Naive thymus-derived CD4-positive, alpha-beta T cell (primary cell): ENCODE measurements at regions of chr13 and their contacts with region 1.

Region 1: GRCh38 chr13:72757792-72758535 is 23.7 kb downstream of the DIS3 start:
- DNase-seq: no peak
- ATAC-seq: no peak
- H3K4me3 ChIP-seq: no peak overlapping the region
- H3K4me3 Mint-ChIP-seq: no peak overlapping the region
- H3K27ac ChIP-seq: no peak overlapping the region
- H3K27ac Mint-ChIP-seq: no peak overlapping the region
- H3K4me1 ChIP-seq: no peaks in the 10 kb centered on the region
- H3K4me1 Mint-ChIP-seq: peaks cover 0 to 10% (median 0%) of the 10 kb centered on the region in 7 donors
- H3K27me3 ChIP-seq: no peaks in the 10 kb centered on the region
- H3K27me3 Mint-ChIP-seq: no peaks in the 10 kb centered on the region

Region 2: DNA sequence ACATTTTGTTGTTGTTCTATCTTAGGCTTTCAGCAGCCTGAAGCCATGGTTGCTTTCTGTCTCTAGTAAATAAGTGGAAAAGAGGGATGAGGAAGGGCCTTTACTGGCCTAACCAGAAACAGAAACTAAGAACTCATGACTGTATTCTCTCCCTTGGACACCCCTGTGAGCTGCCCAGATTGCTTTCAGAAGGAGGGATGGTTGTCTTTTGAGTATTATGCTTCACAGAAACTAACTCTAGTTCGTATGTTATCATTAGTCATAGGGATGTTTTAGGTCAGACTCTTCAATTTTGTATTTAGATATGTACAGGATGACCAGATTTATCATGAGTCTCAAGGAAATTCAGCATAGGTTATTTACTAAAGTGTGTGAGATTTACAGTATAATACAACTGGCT is 12.7 kb before region 1 on chr13:
- CTCF ChIA-PET with region 1: no interaction called
- POLR2A ChIA-PET with region 1: no interaction called
- intact Hi-C with region 1: no loop called
- DNase-seq: no peak
- ATAC-seq: no peak
- H3K4me3 ChIP-seq: no peak overlapping the region
- H3K4me3 Mint-ChIP-seq: no peak overlapping the region
- H3K27ac ChIP-seq: no peak overlapping the region
- H3K27ac Mint-ChIP-seq: peak overlapping the region in 7 of 9 donors; percentile 28 to 65 (median 37)
- H3K4me1 ChIP-seq: no peaks in the 10 kb centered on the region
- H3K4me1 Mint-ChIP-seq: peaks cover 4 to 28% (median 16%) of the 10 kb centered on the region in 7 donors
- H3K27me3 ChIP-seq: no peaks in the 10 kb centered on the region
- H3K27me3 Mint-ChIP-seq: no peaks in the 10 kb centered on the region

Region 3: DNA sequence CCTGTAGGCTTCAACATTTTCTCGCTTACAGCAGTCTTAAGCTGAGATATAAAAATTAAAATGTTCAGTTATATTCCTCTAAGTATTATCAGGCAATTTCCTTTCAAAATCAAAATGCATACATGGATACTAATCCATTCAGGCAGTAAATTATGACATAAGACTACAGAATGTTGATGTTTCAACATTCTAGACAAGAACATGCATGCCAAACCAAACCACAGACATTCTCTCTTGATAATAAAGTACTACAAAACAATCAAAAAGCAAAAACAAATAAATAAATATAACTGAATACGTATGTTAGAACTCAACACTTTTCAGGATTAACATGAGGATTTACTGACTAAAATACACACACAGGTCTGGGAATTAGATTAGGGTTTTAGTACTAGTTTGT is 16.1 kb after region 1 on chr13:
- CTCF ChIA-PET with region 1: no interaction called
- POLR2A ChIA-PET with region 1: interaction called, 5 read pairs
- intact Hi-C with region 1: loop called (anchors 2 kb)
- DNase-seq: no peak
- ATAC-seq: no peak
- H3K4me3 ChIP-seq: no peak overlapping the region
- H3K4me3 Mint-ChIP-seq: no peak overlapping the region
- H3K27ac ChIP-seq: no peak overlapping the region
- H3K27ac Mint-ChIP-seq: peak overlapping the region in 1 of 9 donors; percentile 66
- H3K4me1 ChIP-seq: peaks cover under 1 to 4% of the 10 kb centered on the region in 2 donors
- H3K4me1 Mint-ChIP-seq: peaks cover 13 to 33% (median 23%) of the 10 kb centered on the region in 7 donors
- H3K27me3 ChIP-seq: no peaks in the 10 kb centered on the region
- H3K27me3 Mint-ChIP-seq: no peaks in the 10 kb centered on the region